Cardiac septum (tissue), 1 donor: ENCODE measurements at regions of chr7 and their contacts with region 1.

Region 1: GRCh38 chr7:143901668-143902331 is at the start of gene TCAF1:
- DNase-seq: peak; percentile 98
- total RNA-seq, gene TCAF1: 46.3 TPM

Region 2: DNA sequence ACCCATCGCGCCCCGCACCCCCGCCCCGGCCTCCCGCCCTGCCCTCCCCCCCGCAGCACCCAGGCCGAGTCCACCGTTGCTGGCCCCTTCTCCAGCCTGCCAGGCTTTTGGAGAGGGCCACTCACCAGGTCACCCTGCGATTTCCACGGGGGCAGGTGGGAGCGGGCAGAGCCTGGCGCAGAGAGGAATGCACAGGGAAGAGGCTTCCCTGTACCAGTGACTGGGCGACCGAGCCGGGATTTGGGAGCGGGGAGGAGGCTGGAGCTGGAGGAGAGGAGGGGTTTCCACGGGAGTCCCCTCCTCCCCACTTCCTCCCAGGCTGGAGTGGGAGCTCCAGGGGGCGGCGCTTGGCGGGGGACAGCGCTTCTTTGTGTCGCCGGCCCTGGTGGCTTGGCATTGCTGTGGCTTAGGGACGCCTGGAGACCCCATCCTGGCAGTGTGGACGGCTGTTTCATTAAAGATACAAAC is 19.2 kb before region 1 on chr7:
- intact Hi-C with region 1: loop called (anchors 1 kb)
- DNase-seq: peak; percentile 88